IMR-90 (cell line): ENCODE measurements at regions of chr4 and their contacts with region 1.

Region 1: DNA sequence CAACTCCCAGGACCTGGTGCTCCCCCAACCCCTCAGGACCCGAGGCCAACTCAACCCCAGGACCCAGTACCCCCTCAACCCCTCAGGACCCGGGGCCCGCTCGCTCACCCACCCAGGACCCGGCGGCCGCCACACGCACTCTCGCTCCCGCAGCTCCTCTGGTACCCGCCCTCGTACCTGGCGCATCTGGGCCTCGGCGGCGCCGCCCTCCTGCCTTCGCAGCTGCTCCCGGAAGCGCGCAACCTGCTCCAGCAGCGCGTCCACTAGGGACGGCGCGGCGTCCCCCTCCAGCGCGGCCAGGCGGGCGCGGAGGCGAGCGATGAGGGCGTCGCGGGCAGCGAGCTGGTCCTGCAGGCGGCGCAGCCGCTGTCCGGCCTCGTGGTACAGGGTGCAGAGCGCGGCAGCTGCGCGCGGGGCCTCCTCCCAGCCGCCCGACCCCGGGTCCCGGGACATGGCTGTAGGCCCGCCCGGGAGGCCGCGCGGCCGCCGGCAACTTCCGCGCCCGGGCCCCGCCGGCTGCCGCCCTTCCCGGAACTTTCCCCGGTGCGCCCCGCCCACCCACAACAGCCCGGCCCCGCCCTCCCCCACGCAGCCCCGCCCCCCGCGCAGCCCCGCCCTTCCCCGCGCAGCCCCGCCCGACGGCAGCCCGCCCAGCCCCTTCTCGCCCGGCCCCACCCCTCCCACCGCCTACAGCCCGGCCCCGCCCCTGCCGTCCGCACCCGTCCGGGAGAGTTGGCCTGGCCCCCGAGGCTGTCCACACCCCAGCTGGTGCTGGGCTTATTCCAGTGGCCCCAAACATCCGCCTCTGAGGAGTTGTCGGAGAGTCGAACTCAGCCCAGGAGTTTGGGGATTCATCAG is at the start of gene TNIP2:
- DNase-seq: peak; percentile 73
- ATAC-seq: peak; percentile 92
- H3K4me3 ChIP-seq: peak within 1 kb of the TSS; percentile 99
- H3K27ac ChIP-seq: peak within 1 kb of the TSS; percentile 79
- H3K4me1 ChIP-seq: peaks cover 8% of the 10 kb centered on the region
- H3K27me3 ChIP-seq: no peaks in the 10 kb centered on the region
- CTCF ChIP-seq: peak; percentile 46
- POLR2A ChIP-seq: peak; percentile 34; the same call in 1 of the 2 replicates
- RAD21 ChIP-seq: peak; percentile 15; the same call in 1 of the 2 replicates
- total RNA-seq, gene TNIP2: 33.3 and 36.9 TPM in 2 replicates

Region 2: GRCh38 chr4:2236944-2237666 is 519.0 kb before region 1 on chr4:
- CTCF ChIA-PET with region 1: no interaction called
- POLR2A ChIA-PET with region 1: no interaction called
- dilution Hi-C with region 1: no loop called
- in situ Hi-C with region 1: no loop called
- intact Hi-C with region 1: no loop called
- DNase-seq: no peak
- ATAC-seq: no peak
- H3K4me3 ChIP-seq: no peak overlapping the region
- H3K27ac ChIP-seq: no peak overlapping the region
- H3K4me1 ChIP-seq: peaks cover 3% of the 10 kb centered on the region; the same call in 1 of the 2 replicates
- H3K27me3 ChIP-seq: no peaks in the 10 kb centered on the region
- CTCF ChIP-seq: no peak
- POLR2A ChIP-seq: no peak
- RAD21 ChIP-seq: no peak

Region 3: DNA sequence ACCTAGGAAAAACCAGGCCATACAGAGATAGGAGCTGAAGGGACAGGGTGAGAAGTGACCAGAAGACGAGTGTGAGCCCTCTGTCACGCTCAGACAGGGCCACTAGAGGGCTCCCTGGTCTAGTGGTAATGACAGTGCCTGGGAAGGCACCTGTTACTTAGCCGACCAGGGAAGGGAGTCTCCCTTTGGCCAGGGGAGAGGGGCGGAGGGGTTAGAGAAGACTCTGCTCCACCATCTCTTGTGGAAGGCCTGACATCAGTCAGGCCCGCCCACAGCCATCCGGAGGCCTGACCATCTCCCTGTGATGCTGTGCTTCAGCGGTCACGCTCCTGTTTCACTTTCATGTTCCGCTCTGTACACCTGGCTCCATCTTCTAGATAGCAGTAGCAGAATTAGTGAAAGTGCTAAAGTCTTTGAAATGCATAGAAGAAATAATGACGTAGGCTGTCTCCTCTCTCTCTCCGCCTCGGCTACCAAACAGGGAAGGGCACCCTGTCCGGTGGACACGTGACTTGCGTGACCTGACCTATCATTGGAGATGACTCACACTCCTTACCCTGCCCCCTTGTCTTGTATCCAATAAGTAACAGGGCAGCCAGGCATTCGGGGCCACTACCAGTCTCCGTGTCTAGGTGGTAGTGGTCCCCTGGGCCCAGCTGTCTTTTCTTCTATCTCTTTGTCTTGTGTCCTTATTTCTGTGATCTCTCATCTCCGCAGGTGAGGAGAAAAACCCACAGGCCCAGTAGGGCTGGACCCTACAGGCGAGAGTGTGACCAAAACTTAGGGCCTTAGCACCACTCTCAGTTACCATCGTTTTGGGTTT is 291.6 kb after region 1 on chr4:
- CTCF ChIA-PET with region 1: no interaction called
- POLR2A ChIA-PET with region 1: no interaction called
- dilution Hi-C with region 1: no loop called
- in situ Hi-C with region 1: loop called (anchors 25 kb)
- intact Hi-C with region 1: no loop called
- DNase-seq: peak; percentile 39
- ATAC-seq: peak; percentile 87
- H3K4me3 ChIP-seq: no peak overlapping the region
- H3K27ac ChIP-seq: no peak overlapping the region
- H3K4me1 ChIP-seq: no peaks in the 10 kb centered on the region
- H3K27me3 ChIP-seq: peaks cover 12% of the 10 kb centered on the region
- CTCF ChIP-seq: peak; percentile 63
- POLR2A ChIP-seq: no peak
- RAD21 ChIP-seq: peak; percentile 67